Upper lobe of right lung (tissue), 1 donor: ENCODE measurements at regions of chr17 and their contacts with region 1.

Region 1: DNA sequence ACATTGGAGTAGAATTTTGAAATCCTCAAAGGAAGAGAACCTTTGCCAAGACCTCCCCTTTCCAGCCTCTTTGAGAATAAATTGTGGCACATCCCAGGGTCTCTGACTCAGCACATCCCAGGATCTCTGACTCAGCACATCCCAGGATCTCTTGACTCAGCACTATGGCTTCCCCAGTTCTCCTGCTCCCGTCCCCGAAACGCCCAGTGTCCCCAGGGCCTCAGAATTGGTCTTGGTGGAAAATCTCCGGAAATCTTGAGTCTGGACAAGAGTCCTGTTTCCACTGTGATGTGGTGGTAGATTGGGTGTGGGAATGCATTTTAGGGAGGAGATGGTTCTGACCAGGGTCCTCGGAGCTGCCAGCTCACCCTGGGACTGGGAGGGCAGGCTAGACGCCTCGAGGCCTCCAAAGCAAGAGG is 19.2 kb downstream of the PLXDC1 start:
- DNase-seq: no peak
- ATAC-seq: no peak
- H3K4me3 ChIP-seq: no peak overlapping the region
- H3K27ac ChIP-seq: no peak overlapping the region
- H3K4me1 ChIP-seq: no peaks in the 10 kb centered on the region
- H3K27me3 ChIP-seq: no peaks in the 10 kb centered on the region
- CTCF ChIP-seq: no peak

Region 2: DNA sequence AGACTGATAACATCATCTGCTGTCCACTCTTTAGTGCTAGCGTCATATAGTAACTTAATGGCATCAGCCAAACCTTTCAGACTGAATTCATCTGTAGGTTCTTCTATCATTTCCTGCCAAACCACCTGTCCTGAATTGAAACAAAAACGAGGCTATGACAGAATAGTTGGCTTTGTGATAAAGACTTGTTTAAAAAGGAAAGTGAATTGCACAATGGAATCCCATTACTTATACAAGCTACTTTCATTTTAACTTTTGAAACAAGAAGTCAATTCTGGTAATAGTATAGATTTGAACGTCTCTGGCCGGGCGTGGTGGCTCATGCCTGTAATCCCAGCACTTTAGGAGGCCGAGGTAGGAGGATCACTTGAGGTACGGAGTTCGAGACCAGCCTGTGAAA is 188.6 kb before region 1 on chr17:
- intact Hi-C with region 1: no loop called
- DNase-seq: no peak
- ATAC-seq: no peak
- H3K4me3 ChIP-seq: no peak overlapping the region
- H3K27ac ChIP-seq: no peak overlapping the region
- H3K4me1 ChIP-seq: no peaks in the 10 kb centered on the region
- H3K27me3 ChIP-seq: no peaks in the 10 kb centered on the region
- CTCF ChIP-seq: no peak

Region 3: DNA sequence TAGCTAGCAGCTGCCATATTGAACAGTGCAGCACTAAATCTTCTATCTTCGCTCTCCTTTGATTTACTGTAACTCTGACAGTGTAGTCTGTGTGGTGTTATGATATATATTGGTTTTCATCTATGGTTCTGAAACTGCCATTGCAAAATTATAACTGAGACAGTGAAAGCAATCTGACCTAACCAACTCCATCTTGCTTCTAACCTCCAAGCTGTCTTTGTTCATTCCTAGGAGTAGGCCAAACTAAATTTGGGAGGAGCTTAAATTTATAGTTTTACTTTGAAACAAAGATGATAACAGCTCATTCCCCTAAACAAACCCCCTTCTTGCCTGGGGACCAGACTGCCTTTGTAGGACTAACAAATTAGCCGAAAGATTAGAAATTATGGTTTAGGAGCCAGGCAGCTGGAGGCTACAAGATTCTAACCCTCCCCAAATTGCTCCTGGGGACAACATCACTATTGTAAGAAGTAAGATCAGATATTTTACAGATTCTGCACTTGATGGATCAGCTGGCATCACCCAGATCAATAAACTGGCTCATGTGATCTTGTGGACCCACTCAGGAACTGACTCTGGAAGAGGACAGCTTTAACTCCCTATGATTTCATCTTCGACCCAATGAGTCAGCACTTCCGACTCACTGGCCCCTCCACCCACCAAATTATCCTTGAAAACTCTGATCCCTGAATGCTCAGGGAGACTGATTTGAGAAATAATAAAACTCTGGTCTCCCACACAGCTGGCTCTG is 118.0 kb before region 1 on chr17:
- intact Hi-C with region 1: no loop called
- DNase-seq: no peak
- ATAC-seq: no peak
- H3K4me3 ChIP-seq: no peak overlapping the region
- H3K27ac ChIP-seq: no peak overlapping the region
- H3K4me1 ChIP-seq: peaks cover 18% of the 10 kb centered on the region
- H3K27me3 ChIP-seq: no peaks in the 10 kb centered on the region
- CTCF ChIP-seq: no peak

Region 4: GRCh38 chr17:39045948-39046679 is 86.1 kb before region 1 on chr17:
- intact Hi-C with region 1: no loop called
- DNase-seq: no peak
- ATAC-seq: no peak
- H3K4me3 ChIP-seq: no peak overlapping the region
- H3K27ac ChIP-seq: no peak overlapping the region
- H3K4me1 ChIP-seq: no peaks in the 10 kb centered on the region
- H3K27me3 ChIP-seq: no peaks in the 10 kb centered on the region
- CTCF ChIP-seq: no peak

Region 5: GRCh38 chr17:39080421-39081078 is 51.7 kb before region 1 on chr17:
- intact Hi-C with region 1: loop called (anchors 10 kb)
- DNase-seq: no peak
- ATAC-seq: no peak
- H3K4me3 ChIP-seq: no peak overlapping the region
- H3K27ac ChIP-seq: no peak overlapping the region
- H3K4me1 ChIP-seq: peaks cover 28% of the 10 kb centered on the region
- H3K27me3 ChIP-seq: no peaks in the 10 kb centered on the region
- CTCF ChIP-seq: no peak